ENCODE measurements at regions of chr12 and their contacts with region 1.

Region 1: DNA sequence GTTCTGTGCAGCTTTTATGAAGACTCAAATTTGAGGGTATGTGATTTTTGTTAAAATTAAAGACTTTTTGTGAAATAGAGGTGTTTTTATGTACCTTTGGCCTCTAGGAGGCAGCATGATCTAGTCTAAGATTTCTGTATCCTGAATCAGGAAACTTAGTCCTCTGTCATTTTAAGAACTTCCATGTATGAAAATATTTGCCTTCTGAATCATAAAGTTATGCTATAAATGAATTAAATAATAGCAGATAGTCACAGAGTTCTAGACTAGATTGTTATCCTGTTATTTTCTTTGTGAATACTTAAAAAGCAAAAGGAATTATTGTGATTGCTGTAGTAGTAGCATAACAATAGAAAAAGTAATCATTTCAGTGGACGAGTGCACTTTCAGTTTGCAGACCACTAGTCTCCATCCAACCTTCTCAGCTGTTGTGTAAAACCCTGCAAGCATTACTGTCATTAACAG is 56.3 kb downstream of the FGD4 start:
- DNase-seq: no peak
- H3K4me3 Mint-ChIP-seq: no peak overlapping the region
- H3K27ac Mint-ChIP-seq: no peak overlapping the region
- H3K4me1 Mint-ChIP-seq: no peaks in the 10 kb centered on the region
- H3K27me3 Mint-ChIP-seq: peaks cover 3% of the 10 kb centered on the region

Region 2: GRCh38 chr12:32353540-32353939 is 102.1 kb before region 1 on chr12:
- CTCF ChIA-PET with region 1: no interaction called
- POLR2A ChIA-PET with region 1: no interaction called
- intact Hi-C with region 1: no loop called
- DNase-seq: no peak
- H3K4me3 Mint-ChIP-seq: no peak overlapping the region
- H3K27ac Mint-ChIP-seq: no peak overlapping the region
- H3K4me1 Mint-ChIP-seq: no peaks in the 10 kb centered on the region
- H3K27me3 Mint-ChIP-seq: no peaks in the 10 kb centered on the region

Region 3: GRCh38 chr12:32365473-32366064 is 90.1 kb before region 1 on chr12:
- CTCF ChIA-PET with region 1: interaction called, 4 read pairs
- POLR2A ChIA-PET with region 1: no interaction called
- intact Hi-C with region 1: loop called (anchors 10 kb)
- DNase-seq: peak; percentile 53
- H3K4me3 Mint-ChIP-seq: no peak overlapping the region
- H3K27ac Mint-ChIP-seq: no peak overlapping the region
- H3K4me1 Mint-ChIP-seq: no peaks in the 10 kb centered on the region
- H3K27me3 Mint-ChIP-seq: no peaks in the 10 kb centered on the region

Region 4: GRCh38 chr12:32659908-32660440 is 204.3 kb after region 1 on chr12:
- CTCF ChIA-PET with region 1: interaction called, 5 read pairs
- POLR2A ChIA-PET with region 1: no interaction called
- intact Hi-C with region 1: loop called (anchors 5 kb)
- DNase-seq: no peak
- H3K4me3 Mint-ChIP-seq: no peak overlapping the region
- H3K27ac Mint-ChIP-seq: no peak overlapping the region
- H3K4me1 Mint-ChIP-seq: peaks cover 2% of the 10 kb centered on the region
- H3K27me3 Mint-ChIP-seq: peaks cover 1% of the 10 kb centered on the region

Region 5: DNA sequence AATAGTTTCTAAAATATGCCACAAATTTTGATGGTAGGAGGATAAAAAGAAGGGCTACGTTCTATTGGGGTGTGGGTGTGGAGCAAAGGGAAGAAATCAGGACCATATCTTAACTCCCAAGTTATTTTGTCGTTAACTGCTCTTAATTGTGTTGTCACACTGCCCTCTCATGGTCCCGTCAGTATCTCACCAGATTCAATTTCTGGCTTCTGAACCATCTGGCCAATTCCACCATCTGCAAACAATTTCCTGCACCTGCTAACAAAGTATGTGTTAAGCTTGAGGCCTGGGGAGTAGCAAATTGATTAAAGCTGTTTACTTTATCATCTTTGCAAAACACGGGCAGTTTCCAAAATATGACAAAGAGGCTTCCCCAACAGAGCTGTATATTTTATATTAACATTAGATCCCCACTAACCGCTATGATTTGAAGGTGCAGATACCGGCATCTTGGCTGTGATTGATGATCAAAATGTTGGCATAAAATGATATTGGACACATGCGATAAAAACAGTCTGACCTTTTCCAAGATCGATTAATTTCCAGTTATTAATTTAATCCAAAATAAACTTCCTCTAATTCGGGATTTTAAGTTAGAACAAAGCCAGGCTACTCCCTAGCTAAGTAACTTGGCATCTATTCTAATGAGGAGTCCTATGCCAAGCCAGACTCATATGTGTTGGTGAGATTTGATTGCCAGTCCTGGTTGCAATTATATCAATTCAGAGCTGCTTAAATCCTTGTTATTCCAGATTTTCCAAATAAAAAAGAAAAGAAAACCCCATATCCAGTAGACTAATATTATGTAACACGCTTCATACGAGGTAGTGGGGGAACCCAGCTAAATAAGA is 216.5 kb after region 1 on chr12:
- CTCF ChIA-PET with region 1: interaction called, 15 read pairs
- POLR2A ChIA-PET with region 1: no interaction called
- intact Hi-C with region 1: loop called (anchors 1 kb)
- DNase-seq: no peak
- H3K4me3 Mint-ChIP-seq: no peak overlapping the region
- H3K27ac Mint-ChIP-seq: no peak overlapping the region
- H3K4me1 Mint-ChIP-seq: no peaks in the 10 kb centered on the region
- H3K27me3 Mint-ChIP-seq: peaks cover 6% of the 10 kb centered on the region

Region 6: DNA sequence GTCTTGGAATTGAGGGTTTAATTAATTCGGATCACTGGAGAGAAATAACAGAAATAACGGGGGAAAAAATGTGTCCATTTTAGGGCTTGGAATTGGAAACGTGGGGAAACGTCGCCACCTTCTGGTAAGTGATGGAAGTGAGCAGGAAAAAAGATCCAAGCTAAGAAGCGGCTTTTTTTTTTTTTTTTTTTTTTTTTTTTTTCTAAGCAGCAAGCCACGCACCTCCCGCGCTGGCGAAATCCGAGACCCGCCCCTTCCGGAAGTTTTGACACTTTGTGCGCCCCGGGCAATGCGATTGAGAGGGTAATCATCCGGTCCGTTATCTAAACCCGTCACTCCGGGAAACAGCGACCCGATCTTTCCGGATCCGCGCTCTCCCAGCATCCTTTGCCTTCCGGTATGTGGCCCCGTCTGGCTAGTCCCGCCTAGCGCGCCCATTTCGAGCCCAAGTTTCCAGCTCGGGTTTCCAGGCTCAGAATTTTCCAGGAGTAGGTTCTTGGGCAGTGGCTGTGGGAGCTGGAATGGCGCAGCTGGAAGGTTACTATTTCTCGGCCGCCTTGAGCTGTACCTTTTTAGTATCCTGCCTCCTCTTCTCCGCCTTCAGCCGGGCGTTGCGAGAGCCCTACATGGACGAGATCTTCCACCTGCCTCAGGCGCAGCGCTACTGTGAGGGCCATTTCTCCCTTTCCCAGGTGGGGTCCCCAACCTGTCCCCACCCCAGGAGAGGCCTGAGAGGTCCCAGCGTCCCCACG is 1566.6 kb after region 1 on chr12 and contains the start of gene ALG10:
- CTCF ChIA-PET with region 1: no interaction called
- POLR2A ChIA-PET with region 1: no interaction called
- intact Hi-C with region 1: loop called (anchors 2 kb)
- DNase-seq: peak; percentile 97
- H3K4me3 Mint-ChIP-seq: peak within 1 kb of the TSS; percentile 96
- H3K27ac Mint-ChIP-seq: peak within 1 kb of the TSS; percentile 94
- H3K4me1 Mint-ChIP-seq: peaks cover 15% of the 10 kb centered on the region
- H3K27me3 Mint-ChIP-seq: no peaks in the 10 kb centered on the region
- total RNA-seq, gene ALG10: 19.4 to 20.9 TPM

Measured in activated CD4-positive, alpha-beta memory T cell treated with anti-CD3 and anti-CD28 coated beads for 36 hours (primary cell).